BJ (cell line): ENCODE measurements at regions of chr6 and their contacts with region 1.

Region 1: DNA sequence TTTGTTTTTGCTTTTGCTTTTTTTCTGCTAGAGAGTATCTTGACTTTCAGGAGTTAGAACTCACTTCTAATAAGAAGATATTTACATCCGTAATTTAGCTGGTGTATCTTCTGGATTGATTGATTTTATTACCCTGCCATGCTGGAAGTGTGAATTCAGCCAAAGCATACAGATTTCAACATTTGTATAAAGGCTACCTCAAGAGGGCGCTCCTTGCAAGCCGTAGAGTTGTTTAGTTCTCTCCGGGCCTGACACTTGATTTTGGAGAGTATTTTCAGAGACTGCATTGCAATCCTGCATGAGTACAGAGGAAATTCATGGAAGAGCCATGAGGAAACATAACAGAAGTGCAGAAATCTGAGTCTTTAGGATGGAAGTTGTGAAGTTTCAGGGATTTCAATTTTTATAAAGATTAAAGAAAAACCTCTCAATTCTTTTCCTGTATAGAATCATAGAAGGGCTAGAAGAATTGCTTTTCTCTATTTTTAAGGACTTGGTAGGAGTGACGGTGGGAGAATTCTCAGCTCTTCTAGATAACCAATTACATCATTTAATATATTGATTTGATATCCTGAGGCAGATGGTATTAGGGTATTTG is 66.7 kb upstream of the TIAM2 start:
- DNase-seq: no peak
- H3K4me3 ChIP-seq: no peak overlapping the region
- H3K27me3 ChIP-seq: no peaks in the 10 kb centered on the region
- CTCF ChIP-seq: peak; percentile 80

Region 2: DNA sequence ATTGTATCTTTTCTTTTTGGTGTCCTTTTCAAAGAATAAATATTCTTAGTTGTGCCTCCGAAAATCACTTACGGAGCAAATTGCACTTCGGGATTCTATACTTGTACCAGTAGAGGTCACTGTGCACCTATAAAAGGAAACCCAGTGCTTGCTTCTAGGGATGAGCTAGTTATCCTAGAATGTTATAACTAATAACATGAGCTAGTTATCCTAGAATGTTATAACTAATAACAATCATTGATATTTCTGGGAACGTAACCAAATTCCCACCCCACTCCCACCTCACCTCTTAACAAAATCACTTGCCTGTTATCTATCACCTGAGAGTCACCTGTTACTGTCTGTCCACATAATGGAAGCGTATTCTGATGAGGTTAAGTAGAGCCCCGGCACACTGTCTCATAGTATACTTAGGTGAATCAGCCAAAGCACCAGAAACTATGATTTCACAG is 60.3 kb before region 1 on chr6:
- CTCF ChIA-PET with region 1: interaction called, 10 read pairs
- POLR2A ChIA-PET with region 1: interaction called, 6 read pairs
- DNase-seq: peak; percentile 22
- H3K4me3 ChIP-seq: no peak overlapping the region
- H3K27me3 ChIP-seq: no peaks in the 10 kb centered on the region
- CTCF ChIP-seq: peak; percentile 67

Region 3: DNA sequence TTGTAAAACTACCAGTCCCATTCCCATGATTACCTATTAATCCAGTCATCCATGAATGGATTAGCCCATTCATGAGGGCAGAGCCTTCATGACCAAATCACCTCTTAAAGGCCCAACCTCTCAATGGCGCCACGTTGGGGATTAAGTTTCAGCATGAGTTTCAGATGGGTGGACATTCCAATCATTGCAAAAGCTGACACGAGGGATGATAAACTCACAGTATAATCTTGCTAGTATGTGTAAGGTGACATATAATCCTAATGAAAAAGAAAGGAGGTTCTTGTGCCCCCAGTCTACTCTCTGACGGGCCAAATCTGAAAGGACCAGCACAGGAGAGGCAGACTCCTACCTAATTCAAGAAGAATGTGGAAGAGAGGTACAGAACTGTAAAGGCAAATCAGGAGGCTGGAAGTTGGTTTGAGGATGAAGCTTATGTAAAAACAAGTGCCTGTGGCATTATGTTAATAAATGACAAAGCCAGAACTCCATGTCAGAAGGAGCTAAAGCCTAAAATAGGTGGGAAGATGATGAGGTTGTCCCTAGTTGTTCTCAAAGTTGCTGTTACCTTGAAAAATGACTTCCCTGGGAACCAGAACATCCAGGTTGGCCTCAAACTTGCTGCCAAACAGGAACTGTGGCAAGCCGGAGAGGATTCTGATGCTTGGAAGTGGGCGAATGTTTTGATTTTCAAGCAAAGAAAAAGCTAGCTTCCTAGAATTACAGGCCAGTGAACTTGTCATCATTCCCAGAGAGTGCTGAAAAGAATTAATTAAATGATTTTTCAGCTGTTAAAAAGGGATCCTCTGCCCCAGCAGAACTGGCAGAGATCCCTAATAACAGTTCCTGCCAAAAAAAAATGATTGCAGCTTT is 39.8 kb before region 1 on chr6:
- CTCF ChIA-PET with region 1: no interaction called
- POLR2A ChIA-PET with region 1: no interaction called
- DNase-seq: no peak
- H3K4me3 ChIP-seq: no peak overlapping the region
- H3K27me3 ChIP-seq: no peaks in the 10 kb centered on the region
- CTCF ChIP-seq: no peak

Region 4: DNA sequence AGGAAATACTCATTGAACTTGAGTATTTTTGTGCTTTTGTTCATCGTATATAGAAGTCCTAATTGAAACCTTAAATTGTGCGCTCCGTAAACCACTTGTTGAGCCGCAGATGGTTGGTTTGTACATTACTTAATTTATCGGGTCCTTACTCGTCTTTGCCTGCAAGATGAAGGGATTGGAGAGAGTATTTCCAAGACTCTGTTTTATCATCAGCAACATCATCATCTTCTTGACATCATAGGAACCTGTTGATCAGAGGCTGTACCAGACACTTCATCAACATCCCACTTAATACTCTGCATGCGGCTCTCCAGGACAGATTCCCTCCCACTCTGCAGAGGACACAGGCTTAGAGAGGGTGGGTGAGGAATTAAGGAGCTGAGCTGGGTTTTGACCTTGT is 95.3 kb after region 1 on chr6:
- CTCF ChIA-PET with region 1: no interaction called
- POLR2A ChIA-PET with region 1: no interaction called
- DNase-seq: no peak
- H3K4me3 ChIP-seq: no peak overlapping the region
- H3K27me3 ChIP-seq: no peaks in the 10 kb centered on the region
- CTCF ChIP-seq: no peak

Region 5: GRCh38 chr6:155174576-155175211 is 246.3 kb after region 1 on chr6:
- CTCF ChIA-PET with region 1: interaction called, 161 read pairs
- POLR2A ChIA-PET with region 1: no interaction called
- DNase-seq: no peak
- H3K4me3 ChIP-seq: no peak overlapping the region
- H3K27me3 ChIP-seq: no peaks in the 10 kb centered on the region
- CTCF ChIP-seq: peak; percentile 67

Region 6: GRCh38 chr6:155248008-155249001 is 319.9 kb after region 1 on chr6:
- CTCF ChIA-PET with region 1: interaction called, 27 read pairs
- POLR2A ChIA-PET with region 1: no interaction called
- DNase-seq: no peak
- H3K4me3 ChIP-seq: no peak overlapping the region
- H3K27me3 ChIP-seq: no peaks in the 10 kb centered on the region
- CTCF ChIP-seq: peak; percentile 85

Region 7: GRCh38 chr6:155314773-155315515 is 386.5 kb after region 1 on chr6:
- CTCF ChIA-PET with region 1: interaction called, 11 read pairs
- POLR2A ChIA-PET with region 1: no interaction called
- DNase-seq: peak; percentile 37
- H3K4me3 ChIP-seq: peak overlapping the region; percentile 75
- H3K27me3 ChIP-seq: no peaks in the 10 kb centered on the region
- CTCF ChIP-seq: no peak